GM12878 (cell line): ENCODE measurements at regions of chr2 and their contacts with region 1.

Region 1: GRCh38 chr2:179218848-179219594 is 45.6 kb downstream of the SESTD1 start:
- DNase-seq: peak; percentile 20
- ATAC-seq: peak; percentile 94
- H3K4me3 ChIP-seq: no peak overlapping the region
- H3K27ac ChIP-seq: no peak overlapping the region
- H3K4me1 ChIP-seq: no peaks in the 10 kb centered on the region
- H3K27me3 ChIP-seq: no peaks in the 10 kb centered on the region
- CTCF ChIP-seq: peak; percentile 85 to 94 (median 94); a peak in 5 of 6 replicates
- EP300 ChIP-seq: no peak
- POLR2A ChIP-seq: no peak
- RAD21 ChIP-seq: peak; percentile 98

Region 2: DNA sequence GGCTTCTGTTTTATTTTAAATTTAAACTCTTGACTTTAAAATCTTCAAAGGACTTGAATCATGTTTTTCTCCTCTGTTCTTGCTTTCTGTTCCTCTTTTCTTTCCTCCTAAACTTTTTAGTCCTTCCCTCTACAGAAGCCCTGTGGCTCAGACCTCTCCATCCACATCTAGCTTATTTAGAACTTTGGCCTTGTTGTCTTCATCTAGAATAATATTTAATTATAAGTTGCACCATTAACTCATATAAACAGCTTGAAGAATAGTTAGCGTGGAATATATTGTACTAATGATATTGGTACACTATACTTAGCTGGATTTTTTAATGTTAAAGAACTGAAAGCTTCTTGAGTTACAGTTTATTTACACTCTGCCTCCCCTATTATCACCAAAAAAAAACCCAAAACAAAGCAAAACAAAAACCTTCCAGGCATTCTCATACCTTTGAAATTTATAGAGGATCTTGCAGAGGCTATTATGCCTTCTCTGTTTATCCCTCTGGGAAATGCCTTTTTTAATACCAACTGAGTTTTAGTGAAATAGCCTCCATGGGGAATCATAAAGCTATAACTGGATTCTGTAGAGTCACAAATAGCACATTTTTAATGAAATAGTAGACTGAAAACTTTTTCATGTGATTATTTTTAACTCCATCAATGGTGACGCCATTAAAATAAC is 159.9 kb before region 1 on chr2:
- CTCF ChIA-PET with region 1: no interaction called
- POLR2A ChIA-PET with region 1: no interaction called
- RAD21 ChIA-PET with region 1: no interaction called
- SMC1A ChIA-PET with region 1: no interaction called
- in situ Hi-C with region 1: no loop called
- intact Hi-C with region 1: no loop called
- DNase-seq: no peak
- ATAC-seq: peak; percentile 94
- H3K4me3 ChIP-seq: no peak overlapping the region
- H3K27ac ChIP-seq: peak overlapping the region; percentile 4; the same call in 1 of the 2 replicates
- H3K4me1 ChIP-seq: peaks cover 9% of the 10 kb centered on the region
- H3K27me3 ChIP-seq: no peaks in the 10 kb centered on the region
- CTCF ChIP-seq: no peak
- EP300 ChIP-seq: no peak
- POLR2A ChIP-seq: no peak
- RAD21 ChIP-seq: no peak

Region 3: GRCh38 chr2:179201869-179202268 is 17.2 kb before region 1 on chr2:
- CTCF ChIA-PET with region 1: interaction called, 6 read pairs
- POLR2A ChIA-PET with region 1: no interaction called
- RAD21 ChIA-PET with region 1: no interaction called
- SMC1A ChIA-PET with region 1: interaction called, 3 read pairs
- in situ Hi-C with region 1: no loop called
- intact Hi-C with region 1: loop called (anchors 2 kb)
- DNase-seq: no peak
- ATAC-seq: no peak
- H3K4me3 ChIP-seq: no peak overlapping the region
- H3K27ac ChIP-seq: no peak overlapping the region
- H3K4me1 ChIP-seq: no peaks in the 10 kb centered on the region
- H3K27me3 ChIP-seq: no peaks in the 10 kb centered on the region
- CTCF ChIP-seq: no peak
- EP300 ChIP-seq: no peak
- POLR2A ChIP-seq: no peak
- RAD21 ChIP-seq: no peak

Region 4: GRCh38 chr2:179264368-179265081 is 45.5 kb after region 1 on chr2 and contains the start of gene SESTD1:
- CTCF ChIA-PET with region 1: interaction called, 15 read pairs
- POLR2A ChIA-PET with region 1: no interaction called
- RAD21 ChIA-PET with region 1: interaction called, 6 read pairs
- SMC1A ChIA-PET with region 1: interaction called, 3 read pairs
- in situ Hi-C with region 1: no loop called
- intact Hi-C with region 1: no loop called
- DNase-seq: no peak
- ATAC-seq: peak; percentile 70
- H3K4me3 ChIP-seq: peak within 1 kb of the TSS; percentile 97
- H3K27ac ChIP-seq: peak within 1 kb of the TSS; percentile 52; the same call in 1 of the 2 replicates
- H3K4me1 ChIP-seq: peaks cover 5% of the 10 kb centered on the region
- H3K27me3 ChIP-seq: no peaks in the 10 kb centered on the region
- CTCF ChIP-seq: no peak
- EP300 ChIP-seq: no peak
- POLR2A ChIP-seq: peak; percentile 64
- RAD21 ChIP-seq: no peak
- polyA plus RNA-seq, gene SESTD1: 5.4 to 6.2 TPM

Region 5: GRCh38 chr2:179311101-179311500 is 92.1 kb after region 1 on chr2:
- CTCF ChIA-PET with region 1: no interaction called
- POLR2A ChIA-PET with region 1: no interaction called
- RAD21 ChIA-PET with region 1: no interaction called
- SMC1A ChIA-PET with region 1: no interaction called
- in situ Hi-C with region 1: no loop called
- intact Hi-C with region 1: no loop called
- DNase-seq: no peak
- ATAC-seq: no peak
- H3K4me3 ChIP-seq: no peak overlapping the region
- H3K27ac ChIP-seq: no peak overlapping the region
- H3K4me1 ChIP-seq: no peaks in the 10 kb centered on the region
- H3K27me3 ChIP-seq: no peaks in the 10 kb centered on the region; a peak in 1 of 4 replicates
- CTCF ChIP-seq: no peak
- EP300 ChIP-seq: no peak
- POLR2A ChIP-seq: no peak
- RAD21 ChIP-seq: no peak

Region 6: DNA sequence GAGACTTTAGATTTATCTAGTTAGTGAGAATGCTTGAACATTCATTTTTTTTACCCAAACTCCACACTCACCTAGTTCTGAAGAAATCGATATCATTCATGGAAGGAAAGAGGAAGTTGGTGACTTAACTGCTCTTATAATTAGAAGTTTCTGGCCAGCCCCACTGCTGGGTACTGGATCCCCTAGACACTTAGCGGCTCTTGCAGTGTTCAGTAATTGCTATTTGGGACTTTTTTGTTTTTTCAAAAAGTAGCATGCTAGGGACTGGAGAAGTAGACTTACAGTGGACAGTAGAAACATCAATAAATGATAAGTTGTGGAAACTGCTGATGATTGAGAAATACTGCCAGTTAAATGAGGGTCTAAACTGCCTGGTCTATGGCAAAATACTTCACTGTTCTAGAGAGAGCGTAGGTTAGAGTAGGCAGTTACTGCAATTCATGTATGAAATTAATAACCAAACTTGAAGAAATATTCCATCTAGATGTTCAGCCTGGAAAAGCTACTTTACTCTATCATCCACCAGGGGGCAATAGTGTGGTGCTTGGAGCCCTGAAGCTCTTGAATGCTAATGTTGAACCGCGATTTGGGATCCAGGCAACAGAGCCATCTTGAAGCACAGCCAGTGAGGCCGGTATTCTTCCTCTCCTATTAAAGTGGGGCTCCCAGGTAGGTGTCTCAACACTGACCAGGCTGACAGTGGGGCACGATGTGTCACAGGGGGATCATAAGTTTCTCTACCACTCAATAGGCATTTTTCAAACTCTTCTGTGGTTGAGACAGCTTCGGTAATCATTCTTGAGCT is 191.7 kb after region 1 on chr2:
- CTCF ChIA-PET with region 1: interaction called, 9 read pairs
- POLR2A ChIA-PET with region 1: interaction called, 3 read pairs
- RAD21 ChIA-PET with region 1: interaction called, 10 read pairs
- SMC1A ChIA-PET with region 1: interaction called, 8 read pairs
- in situ Hi-C with region 1: no loop called
- intact Hi-C with region 1: loop called (anchors 1 kb)
- DNase-seq: no peak
- ATAC-seq: peak; percentile 92
- H3K4me3 ChIP-seq: no peak overlapping the region
- H3K27ac ChIP-seq: no peak overlapping the region
- H3K4me1 ChIP-seq: no peaks in the 10 kb centered on the region
- H3K27me3 ChIP-seq: no peaks in the 10 kb centered on the region
- CTCF ChIP-seq: peak; percentile 63 to 73 (median 71)
- EP300 ChIP-seq: no peak
- POLR2A ChIP-seq: no peak
- RAD21 ChIP-seq: peak; percentile 62

Region 7: DNA sequence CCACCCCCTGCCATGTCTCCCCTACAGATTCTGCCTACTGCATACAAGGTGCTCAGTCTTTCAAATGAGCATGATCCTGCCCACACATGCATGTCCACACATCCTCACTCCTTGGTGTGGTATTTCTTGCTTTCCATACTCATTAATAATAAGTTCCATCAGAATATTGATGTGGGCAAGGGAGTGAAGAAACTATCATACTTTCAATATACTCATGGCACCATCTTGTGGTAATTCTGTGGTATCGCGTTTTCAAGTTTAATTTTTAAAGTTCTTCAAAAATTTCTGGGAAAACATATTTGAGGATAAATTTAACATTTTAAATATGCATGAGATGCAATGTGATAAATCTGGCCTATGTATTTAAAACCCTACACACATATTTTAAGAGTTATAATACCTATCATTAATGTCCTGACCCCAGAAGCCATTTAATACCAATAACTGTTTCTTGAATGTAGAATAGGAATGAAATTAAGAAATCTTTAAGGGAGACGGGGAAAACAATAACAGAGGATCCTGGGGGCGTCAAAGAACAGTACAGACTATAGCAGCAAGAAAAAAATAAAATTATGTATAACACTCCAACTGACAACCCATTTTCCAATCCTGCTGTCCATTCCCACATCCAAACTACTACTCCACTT is 532.3 kb after region 1 on chr2:
- CTCF ChIA-PET with region 1: no interaction called
- POLR2A ChIA-PET with region 1: no interaction called
- RAD21 ChIA-PET with region 1: no interaction called
- SMC1A ChIA-PET with region 1: no interaction called
- in situ Hi-C with region 1: loop called (anchors 25 kb)
- intact Hi-C with region 1: loop called (anchors 5 kb)
- DNase-seq: no peak
- ATAC-seq: peak; percentile 50
- H3K4me3 ChIP-seq: no peak overlapping the region
- H3K27ac ChIP-seq: no peak overlapping the region
- H3K4me1 ChIP-seq: no peaks in the 10 kb centered on the region
- H3K27me3 ChIP-seq: no peaks in the 10 kb centered on the region
- CTCF ChIP-seq: peak; percentile 42 to 66 (median 57); a peak in 5 of 6 replicates
- EP300 ChIP-seq: no peak
- POLR2A ChIP-seq: no peak
- RAD21 ChIP-seq: peak; percentile 78